Right ventricle myocardium inferior (tissue), 1 donor: ENCODE measurements at regions of chr5 and their contacts with region 1.

Region 1: GRCh38 chr5:17081142-17081541 is 136.3 kb upstream of the BASP1 start:
- DNase-seq: no peak
- ATAC-seq: no peak

Region 2: DNA sequence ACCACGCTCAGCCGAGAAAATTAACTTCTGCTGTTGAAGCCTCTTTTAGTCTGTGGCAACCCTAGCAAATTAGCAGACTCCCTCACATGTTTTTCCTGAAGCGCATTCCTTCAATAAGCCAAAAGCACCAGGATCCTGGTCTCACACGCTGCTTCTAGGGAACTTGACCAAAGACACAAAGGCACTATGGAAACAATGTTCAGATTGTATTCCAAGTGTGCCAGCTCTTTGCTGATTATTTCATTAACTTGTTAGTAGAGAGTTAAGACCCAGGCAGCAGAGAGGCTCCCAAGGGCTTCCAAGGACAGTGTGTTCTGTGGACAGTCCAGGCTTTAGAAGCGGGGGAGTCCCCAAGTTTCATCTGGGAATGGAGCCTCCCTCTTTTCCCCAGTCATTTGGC is 41.9 kb after region 1 on chr5:
- intact Hi-C with region 1: loop called (anchors 5 kb)
- DNase-seq: no peak
- ATAC-seq: peak; percentile 27